PC-3 (cell line): ENCODE measurements at regions of chr10 and their contacts with region 1.

Region 1: DNA sequence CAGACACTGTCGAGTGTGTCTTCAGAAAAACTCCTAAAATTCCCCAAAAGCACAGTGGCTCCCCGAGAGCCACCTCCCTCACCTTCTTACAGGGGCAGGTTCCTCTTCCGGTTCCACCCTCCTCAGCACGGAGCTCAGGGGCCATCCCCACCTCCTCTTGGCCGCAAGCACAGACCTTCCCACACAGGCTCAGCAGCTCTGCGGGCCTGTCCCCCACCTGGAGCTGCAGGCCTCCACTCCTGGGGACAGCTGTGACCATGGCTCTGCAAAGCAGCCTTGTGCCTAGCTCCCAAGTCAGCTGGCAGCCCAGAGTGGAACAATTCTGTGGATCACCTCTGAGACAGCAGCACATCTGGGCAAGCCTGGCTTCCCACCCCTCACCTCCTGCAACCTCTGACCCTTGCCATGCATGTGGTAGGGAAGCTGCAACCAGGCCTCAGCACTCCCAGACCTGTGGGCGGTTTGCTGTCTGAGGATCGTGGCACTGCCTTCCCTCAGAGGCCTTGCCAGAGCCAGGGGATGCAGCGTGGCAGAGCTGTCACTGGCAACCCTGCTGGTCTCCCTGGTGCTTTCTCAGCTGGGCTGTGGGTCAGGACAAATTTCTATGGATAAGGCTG is 79.7 kb downstream of the ALOX5 start:
- DNase-seq: no peak
- ATAC-seq: no peak
- H3K4me3 ChIP-seq: no peak overlapping the region
- H3K27ac ChIP-seq: no peak overlapping the region
- H3K4me1 ChIP-seq: peaks cover 9% of the 10 kb centered on the region
- H3K27me3 ChIP-seq: no peaks in the 10 kb centered on the region
- CTCF ChIP-seq: no peak

Region 2: GRCh38 chr10:45235798-45236231 is 217.9 kb before region 1 on chr10:
- CTCF ChIA-PET with region 1: no interaction called
- POLR2A ChIA-PET with region 1: no interaction called
- intact Hi-C with region 1: loop called (anchors 2 kb)
- DNase-seq: peak; percentile 83
- ATAC-seq: peak; percentile 82
- H3K4me3 ChIP-seq: peak overlapping the region; percentile 28; the same call in 1 of the 2 replicates
- H3K27ac ChIP-seq: peak overlapping the region; percentile 64
- H3K4me1 ChIP-seq: peaks cover 15% of the 10 kb centered on the region
- H3K27me3 ChIP-seq: no peaks in the 10 kb centered on the region
- CTCF ChIP-seq: no peak

Region 3: GRCh38 chr10:45495438-45496152 is 41.8 kb after region 1 on chr10:
- CTCF ChIA-PET with region 1: no interaction called
- POLR2A ChIA-PET with region 1: no interaction called
- intact Hi-C with region 1: no loop called
- DNase-seq: peak; percentile 10
- ATAC-seq: no peak
- H3K4me3 ChIP-seq: no peak overlapping the region
- H3K27ac ChIP-seq: no peak overlapping the region
- H3K4me1 ChIP-seq: peaks cover 4% of the 10 kb centered on the region; the same call in 1 of the 2 replicates
- H3K27me3 ChIP-seq: no peaks in the 10 kb centered on the region
- CTCF ChIP-seq: no peak